G401 (cell line): ENCODE measurements at regions of chr10 and their contacts with region 1.

Region 1: GRCh38 chr10:95601116-95601719 is 40.0 kb upstream of the SORBS1 start:
- DNase-seq: peak; percentile 92

Region 2: GRCh38 chr10:95133016-95133752 is 468.0 kb before region 1 on chr10:
- in situ Hi-C with region 1: loop called (anchors 10 kb)
- DNase-seq: peak; percentile 42

Region 3: DNA sequence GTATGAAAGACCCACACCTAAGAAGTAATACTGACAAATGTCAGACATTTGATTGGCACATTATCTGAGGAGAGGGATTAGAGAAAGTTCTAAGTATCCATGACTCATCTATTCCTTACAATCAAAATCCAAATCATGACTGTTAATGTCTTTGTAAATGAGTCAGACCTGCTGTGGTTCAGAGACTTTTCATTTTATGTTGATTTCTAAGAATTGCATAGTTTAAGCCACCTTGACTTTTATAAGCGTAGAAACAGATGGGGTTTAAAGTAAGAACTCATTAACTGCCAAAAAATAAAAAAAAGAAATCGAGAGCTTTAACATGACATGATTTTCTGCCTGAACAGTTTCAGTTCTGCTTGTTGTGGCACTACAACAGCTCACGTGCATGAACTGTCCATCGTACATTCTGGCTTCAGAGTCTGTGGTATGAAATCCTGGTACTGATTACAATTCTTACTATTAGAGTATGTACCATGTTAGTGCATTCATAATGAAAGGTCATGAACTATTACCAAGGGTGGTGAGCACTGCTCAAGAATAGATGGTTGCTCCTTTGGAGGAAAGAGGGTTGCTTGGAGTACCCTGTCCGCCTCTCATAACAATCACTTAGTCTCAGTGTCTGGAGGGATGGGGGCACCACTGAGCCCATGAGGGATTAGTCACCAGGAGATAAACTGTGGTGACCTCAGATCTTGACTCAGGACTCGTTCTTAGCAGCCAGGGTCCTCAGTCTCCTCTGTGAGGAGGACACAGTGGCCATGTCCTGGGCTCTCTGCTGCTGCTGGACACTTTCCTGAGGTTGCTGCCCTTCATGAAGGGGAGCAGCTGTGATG is 364.9 kb before region 1 on chr10:
- in situ Hi-C with region 1: no loop called
- DNase-seq: no peak